ENCODE measurements at regions of chr5 and their contacts with region 1.

Region 1: GRCh38 chr5:91162534-91163381 is 220.4 kb downstream of the ARRDC3 start:
- DNase-seq: peak; percentile 85
- ATAC-seq: peak; percentile 99
- H3K4me3 Mint-ChIP-seq: no peak overlapping the region
- H3K27ac Mint-ChIP-seq: peak overlapping the region; percentile 74
- H3K4me1 Mint-ChIP-seq: peaks cover 21% of the 10 kb centered on the region
- H3K27me3 Mint-ChIP-seq: peaks cover 1% of the 10 kb centered on the region

Region 2: DNA sequence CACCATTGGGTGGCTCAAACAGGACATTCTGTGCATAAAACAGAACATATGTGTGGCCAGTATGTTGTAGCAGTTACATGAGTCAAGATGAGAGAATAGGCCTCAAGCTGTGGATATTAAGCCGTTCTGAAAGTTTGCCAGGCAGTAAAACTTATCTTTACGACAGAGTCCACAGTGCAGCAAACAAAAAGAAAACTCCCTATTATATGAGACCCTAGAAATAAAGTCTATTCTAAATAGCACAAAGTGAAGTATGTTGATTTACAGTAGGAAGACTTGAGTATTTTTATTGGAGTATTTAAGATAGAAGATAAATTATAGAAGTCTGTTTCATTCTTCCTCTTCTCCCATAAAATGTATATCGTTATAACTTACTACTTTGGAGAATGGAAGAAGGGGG is 332.7 kb before region 1 on chr5:
- CTCF ChIA-PET with region 1: no interaction called
- POLR2A ChIA-PET with region 1: no interaction called
- intact Hi-C with region 1: no loop called
- DNase-seq: no peak
- ATAC-seq: no peak
- H3K4me3 Mint-ChIP-seq: no peak overlapping the region
- H3K27ac Mint-ChIP-seq: no peak overlapping the region
- H3K4me1 Mint-ChIP-seq: no peaks in the 10 kb centered on the region
- H3K27me3 Mint-ChIP-seq: peaks cover 4% of the 10 kb centered on the region

Region 3: GRCh38 chr5:90873033-90873517 is 289.7 kb before region 1 on chr5:
- CTCF ChIA-PET with region 1: no interaction called
- POLR2A ChIA-PET with region 1: no interaction called
- intact Hi-C with region 1: loop called (anchors 5 to 10 kb)
- DNase-seq: peak; percentile 50
- ATAC-seq: peak; percentile 86
- H3K4me3 Mint-ChIP-seq: no peak overlapping the region
- H3K27ac Mint-ChIP-seq: no peak overlapping the region
- H3K4me1 Mint-ChIP-seq: peaks cover 30% of the 10 kb centered on the region
- H3K27me3 Mint-ChIP-seq: peaks cover 38% of the 10 kb centered on the region

Region 4: GRCh38 chr5:90878549-90879196 is 284.1 kb before region 1 on chr5:
- CTCF ChIA-PET with region 1: no interaction called
- POLR2A ChIA-PET with region 1: no interaction called
- intact Hi-C with region 1: loop called (anchors 5 to 10 kb)
- DNase-seq: no peak
- ATAC-seq: peak; percentile 49
- H3K4me3 Mint-ChIP-seq: no peak overlapping the region
- H3K27ac Mint-ChIP-seq: no peak overlapping the region
- H3K4me1 Mint-ChIP-seq: peaks cover 8% of the 10 kb centered on the region
- H3K27me3 Mint-ChIP-seq: peaks cover 46% of the 10 kb centered on the region

Region 5: GRCh38 chr5:90939211-90939610 is 223.5 kb before region 1 on chr5:
- CTCF ChIA-PET with region 1: no interaction called
- POLR2A ChIA-PET with region 1: no interaction called
- intact Hi-C with region 1: loop called in 1 of 2 experiments (anchors 5 kb)
- DNase-seq: no peak
- ATAC-seq: no peak
- H3K4me3 Mint-ChIP-seq: no peak overlapping the region
- H3K27ac Mint-ChIP-seq: no peak overlapping the region
- H3K4me1 Mint-ChIP-seq: peaks cover 17% of the 10 kb centered on the region
- H3K27me3 Mint-ChIP-seq: no peaks in the 10 kb centered on the region

Region 6: DNA sequence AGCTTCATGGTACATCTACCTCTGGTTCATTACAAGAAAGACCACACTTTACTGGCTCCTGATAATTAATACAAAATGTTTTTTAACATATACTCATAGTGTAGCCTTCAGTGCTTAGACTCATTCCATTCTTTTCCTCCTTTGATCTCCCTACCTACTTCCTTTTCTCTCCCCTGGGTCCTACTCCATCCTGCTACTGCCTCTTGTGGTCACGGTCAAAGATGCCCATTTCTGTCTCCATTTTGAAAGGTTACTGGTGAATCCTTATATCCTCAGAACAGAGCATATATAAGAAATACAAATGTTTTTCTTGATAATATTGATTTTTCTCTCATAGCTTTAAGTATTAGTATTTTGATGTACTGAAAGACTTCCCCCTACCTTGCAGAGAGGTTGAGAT is 155.5 kb before region 1 on chr5:
- CTCF ChIA-PET with region 1: no interaction called
- POLR2A ChIA-PET with region 1: no interaction called
- intact Hi-C with region 1: no loop called
- DNase-seq: no peak
- ATAC-seq: no peak
- H3K4me3 Mint-ChIP-seq: no peak overlapping the region
- H3K27ac Mint-ChIP-seq: no peak overlapping the region
- H3K4me1 Mint-ChIP-seq: no peaks in the 10 kb centered on the region
- H3K27me3 Mint-ChIP-seq: peaks cover 22% of the 10 kb centered on the region

Region 7: GRCh38 chr5:91059409-91059808 is 103.3 kb before region 1 on chr5:
- CTCF ChIA-PET with region 1: no interaction called
- POLR2A ChIA-PET with region 1: interaction called, 3 read pairs
- intact Hi-C with region 1: loop called in 1 of 2 experiments (anchors 5 kb)
- DNase-seq: no peak
- ATAC-seq: peak; percentile 90
- H3K4me3 Mint-ChIP-seq: no peak overlapping the region
- H3K27ac Mint-ChIP-seq: no peak overlapping the region
- H3K4me1 Mint-ChIP-seq: peaks cover 25% of the 10 kb centered on the region
- H3K27me3 Mint-ChIP-seq: peaks cover 39% of the 10 kb centered on the region

Region 8: DNA sequence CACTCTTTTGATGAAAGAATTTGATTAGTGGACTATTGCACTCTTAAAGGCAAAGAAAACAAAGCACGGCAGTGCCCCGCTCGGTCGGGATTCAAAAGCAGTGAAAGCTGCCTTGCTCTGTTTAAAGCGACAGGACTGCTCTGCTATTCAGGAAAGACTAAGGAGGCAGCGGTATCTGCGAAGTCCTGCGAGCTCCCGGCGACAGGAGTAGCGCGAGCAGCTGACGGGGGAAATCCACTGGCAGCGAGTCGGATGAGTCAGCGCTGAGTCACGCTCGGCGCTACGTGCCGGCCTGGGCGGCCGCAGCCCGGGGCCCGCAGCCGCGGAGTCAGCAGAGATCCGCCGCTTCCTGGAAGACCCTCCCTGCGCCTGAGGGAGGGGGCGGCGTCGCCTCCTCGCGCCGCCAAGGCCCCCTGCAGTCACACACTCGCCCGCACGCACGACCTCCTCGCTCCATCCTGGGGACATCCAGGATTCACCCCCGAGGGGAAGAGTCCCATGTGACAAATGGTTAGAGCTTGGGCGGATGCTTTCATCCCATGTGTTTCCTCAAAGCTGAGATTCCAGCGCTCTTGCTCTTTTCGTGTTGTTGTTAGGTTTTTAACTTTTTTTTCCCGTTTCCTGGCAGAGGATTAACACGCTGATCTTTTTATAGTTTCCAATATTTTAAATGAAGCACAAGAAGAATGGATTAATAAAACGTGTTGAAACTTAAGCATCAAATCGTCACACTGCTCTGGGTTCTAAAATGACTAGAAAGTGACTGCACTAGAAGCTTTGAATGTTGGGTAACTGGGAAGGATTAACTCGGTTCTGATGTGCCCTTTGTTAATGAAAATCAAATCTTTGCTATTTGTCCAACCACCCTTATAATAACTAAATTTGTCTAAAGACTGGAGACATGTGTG is 117.9 kb after region 1 on chr5:
- CTCF ChIA-PET with region 1: no interaction called
- POLR2A ChIA-PET with region 1: no interaction called
- intact Hi-C with region 1: loop called in 1 of 2 experiments (anchors 2 kb)
- DNase-seq: peak; percentile 97
- ATAC-seq: peak; percentile 80
- H3K4me3 Mint-ChIP-seq: peak overlapping the region; percentile 76
- H3K27ac Mint-ChIP-seq: peak overlapping the region; percentile 99
- H3K4me1 Mint-ChIP-seq: peaks cover 53% of the 10 kb centered on the region
- H3K27me3 Mint-ChIP-seq: no peaks in the 10 kb centered on the region

Measured in activated CD4-positive, alpha-beta T cell treated with anti-CD3 and anti-CD28 coated beads for 36 hours (primary cell).